Activated CD4-positive, alpha-beta T cell treated with anti-CD3 and anti-CD28 coated beads for 36 hours (primary cell): ENCODE measurements at regions of chr12 and their contacts with region 1.

Region 1: DNA sequence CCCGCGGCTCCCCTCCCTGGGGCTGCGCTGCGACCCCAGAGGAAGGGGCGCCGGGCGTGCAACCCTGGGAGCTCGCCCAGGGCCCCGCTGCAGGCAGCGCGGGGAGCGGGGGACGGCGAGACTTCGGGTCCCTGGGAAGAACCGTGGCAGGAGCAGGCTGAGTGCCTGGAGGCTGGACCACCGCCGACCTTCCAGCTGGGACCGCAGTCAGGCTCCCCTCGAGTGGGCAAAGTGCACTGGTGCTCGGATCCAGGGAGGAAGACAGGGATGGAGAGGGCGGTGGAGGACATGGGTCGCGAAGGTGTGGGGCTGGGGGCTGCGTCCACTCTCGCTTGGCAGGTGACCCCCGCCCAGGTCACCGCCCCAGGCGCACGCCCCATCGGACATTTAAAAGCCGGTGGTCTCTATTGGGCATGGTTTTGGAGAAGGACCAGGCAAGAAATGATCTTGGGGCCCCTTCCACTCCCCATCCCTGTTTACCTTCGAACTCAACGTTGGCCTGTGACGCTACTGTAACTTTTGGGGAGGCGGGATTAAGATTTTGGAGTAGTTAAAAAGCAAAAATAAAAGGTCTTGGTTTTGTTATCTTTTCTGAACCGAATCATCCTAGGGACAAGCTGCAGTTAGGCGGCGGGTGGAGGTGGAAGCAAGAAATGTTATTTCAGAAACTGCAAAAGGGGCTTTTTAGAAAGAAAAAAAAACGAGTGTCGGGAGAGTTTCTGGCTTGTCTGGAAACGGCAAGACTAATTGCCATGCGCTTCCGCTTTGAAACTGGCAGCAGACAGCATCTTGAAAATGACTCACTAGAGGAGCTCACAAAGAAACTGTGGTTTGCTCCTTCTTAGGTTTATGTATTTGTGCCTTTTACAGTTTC is 1.0 kb downstream of the ELK3 start:
- DNase-seq: peak; percentile 86
- ATAC-seq: peak; percentile 73
- H3K4me3 Mint-ChIP-seq: peak overlapping the region; percentile 97
- H3K27ac Mint-ChIP-seq: peak overlapping the region; percentile 100
- H3K4me1 Mint-ChIP-seq: peaks cover 61% of the 10 kb centered on the region
- H3K27me3 Mint-ChIP-seq: no peaks in the 10 kb centered on the region

Region 2: DNA sequence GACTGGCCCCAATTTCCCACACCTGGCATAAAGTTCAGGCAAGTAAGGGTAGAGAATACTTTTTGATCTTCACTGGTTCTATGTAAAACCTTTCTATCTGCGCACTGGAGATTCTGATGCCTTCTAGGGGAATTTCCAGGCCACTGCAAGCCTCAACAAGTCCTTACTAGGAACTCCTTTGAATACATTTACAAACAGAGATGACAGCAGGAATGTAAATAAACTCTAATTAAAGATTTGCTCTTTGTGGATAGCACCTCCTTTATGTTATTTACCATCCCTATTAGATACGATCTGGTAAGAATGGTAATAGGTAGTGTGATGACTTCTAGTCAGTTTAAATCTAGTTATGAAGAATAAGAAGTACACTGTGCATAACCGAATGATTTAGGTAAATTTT is 473.9 kb before region 1 on chr12:
- CTCF ChIA-PET with region 1: no interaction called
- POLR2A ChIA-PET with region 1: no interaction called
- intact Hi-C with region 1: no loop called
- DNase-seq: no peak
- ATAC-seq: no peak
- H3K4me3 Mint-ChIP-seq: no peak overlapping the region
- H3K27ac Mint-ChIP-seq: no peak overlapping the region
- H3K4me1 Mint-ChIP-seq: no peaks in the 10 kb centered on the region
- H3K27me3 Mint-ChIP-seq: peaks cover 5% of the 10 kb centered on the region

Region 3: DNA sequence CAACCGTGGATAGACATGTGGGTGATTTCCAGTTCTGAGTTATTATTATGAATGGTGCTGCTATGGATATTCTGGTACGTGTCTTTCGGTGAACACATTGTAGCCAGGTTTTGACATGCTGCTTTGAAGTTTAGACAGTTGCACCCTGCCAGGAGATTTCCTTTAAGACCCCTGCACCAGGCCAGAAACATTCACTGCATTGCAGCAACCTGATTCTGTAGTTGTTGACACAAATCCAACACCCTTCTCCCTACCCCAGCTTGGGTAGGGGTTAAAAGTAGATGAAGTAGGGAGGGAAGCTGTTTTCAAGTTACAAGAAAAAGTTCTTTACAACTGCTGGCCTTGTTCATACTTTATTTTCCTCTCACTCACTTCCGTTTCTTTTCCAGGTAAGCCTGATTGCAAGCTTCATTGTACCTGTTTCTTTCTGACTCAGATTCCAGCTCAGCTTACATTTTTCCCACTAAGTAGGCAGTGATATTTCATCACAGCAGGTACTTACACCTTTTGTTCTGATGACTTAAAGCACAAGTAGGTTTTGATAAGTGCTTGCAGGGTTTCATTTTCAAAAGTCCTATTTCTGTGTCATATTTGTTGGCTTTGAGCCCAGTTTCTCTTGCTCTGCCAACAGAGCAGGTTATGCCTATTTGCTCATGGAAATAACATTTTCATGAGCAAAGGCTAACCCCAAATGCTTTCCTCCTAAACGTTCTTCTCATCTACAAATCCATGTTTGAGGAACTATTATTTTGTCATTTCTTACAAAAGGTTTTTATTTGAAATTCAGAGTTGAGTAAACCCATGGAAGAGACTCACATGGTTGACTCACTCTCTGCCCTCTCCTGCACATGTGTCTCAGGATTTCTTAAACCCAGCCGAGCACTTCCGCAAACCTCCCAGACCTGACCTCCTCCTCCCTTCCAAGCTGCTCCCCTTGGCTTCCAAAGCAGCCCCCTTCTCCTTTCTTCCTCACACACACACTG is 147.7 kb before region 1 on chr12:
- CTCF ChIA-PET with region 1: interaction called, 3 read pairs
- POLR2A ChIA-PET with region 1: no interaction called
- intact Hi-C with region 1: loop called (anchors 1 kb)
- DNase-seq: peak; percentile 30
- ATAC-seq: peak; percentile 83
- H3K4me3 Mint-ChIP-seq: peak overlapping the region; percentile 20
- H3K27ac Mint-ChIP-seq: peak overlapping the region; percentile 92
- H3K4me1 Mint-ChIP-seq: peaks cover 58% of the 10 kb centered on the region
- H3K27me3 Mint-ChIP-seq: no peaks in the 10 kb centered on the region

Region 4: GRCh38 chr12:96132819-96133218 is 62.4 kb before region 1 on chr12:
- CTCF ChIA-PET with region 1: no interaction called
- POLR2A ChIA-PET with region 1: no interaction called
- intact Hi-C with region 1: loop called in 1 of 2 experiments (anchors 10 kb)
- DNase-seq: peak; percentile 39
- ATAC-seq: no peak
- H3K4me3 Mint-ChIP-seq: no peak overlapping the region
- H3K27ac Mint-ChIP-seq: no peak overlapping the region
- H3K4me1 Mint-ChIP-seq: peaks cover 23% of the 10 kb centered on the region
- H3K27me3 Mint-ChIP-seq: peaks cover 6% of the 10 kb centered on the region

Region 5: GRCh38 chr12:96208801-96209549 is 13.8 kb after region 1 on chr12:
- CTCF ChIA-PET with region 1: interaction called, 80 read pairs
- POLR2A ChIA-PET with region 1: interaction called, 15 read pairs
- intact Hi-C with region 1: loop called in 1 of 2 experiments (anchors 1 kb)
- DNase-seq: no peak
- ATAC-seq: no peak
- H3K4me3 Mint-ChIP-seq: peak overlapping the region; percentile 3
- H3K27ac Mint-ChIP-seq: peak overlapping the region; percentile 98
- H3K4me1 Mint-ChIP-seq: peaks cover 99% of the 10 kb centered on the region
- H3K27me3 Mint-ChIP-seq: no peaks in the 10 kb centered on the region

Region 6: GRCh38 chr12:96425321-96425720 is 230.1 kb after region 1 on chr12:
- CTCF ChIA-PET with region 1: interaction called, 3 read pairs
- POLR2A ChIA-PET with region 1: no interaction called
- intact Hi-C with region 1: loop called in 1 of 2 experiments (anchors 1 kb)
- DNase-seq: peak; percentile 65
- ATAC-seq: peak; percentile 80
- H3K4me3 Mint-ChIP-seq: no peak overlapping the region
- H3K27ac Mint-ChIP-seq: peak overlapping the region; percentile 63
- H3K4me1 Mint-ChIP-seq: peaks cover 47% of the 10 kb centered on the region
- H3K27me3 Mint-ChIP-seq: peaks cover 2% of the 10 kb centered on the region

Region 7: GRCh38 chr12:96489103-96490056 is 294.2 kb after region 1 on chr12 and contains the start of gene CFAP54:
- CTCF ChIA-PET with region 1: no interaction called
- POLR2A ChIA-PET with region 1: no interaction called
- intact Hi-C with region 1: loop called in 1 of 2 experiments (anchors 2 kb)
- DNase-seq: peak; percentile 97
- ATAC-seq: peak; percentile 86
- H3K4me3 Mint-ChIP-seq: peak within 1 kb of the TSS; percentile 80
- H3K27ac Mint-ChIP-seq: peak within 1 kb of the TSS; percentile 66
- H3K4me1 Mint-ChIP-seq: peaks cover 33% of the 10 kb centered on the region
- H3K27me3 Mint-ChIP-seq: no peaks in the 10 kb centered on the region
- total RNA-seq, gene CFAP54: 0.37 to 0.44 TPM